ENCODE measurements at regions of chr22 and their contacts with region 1.

Region 1: DNA sequence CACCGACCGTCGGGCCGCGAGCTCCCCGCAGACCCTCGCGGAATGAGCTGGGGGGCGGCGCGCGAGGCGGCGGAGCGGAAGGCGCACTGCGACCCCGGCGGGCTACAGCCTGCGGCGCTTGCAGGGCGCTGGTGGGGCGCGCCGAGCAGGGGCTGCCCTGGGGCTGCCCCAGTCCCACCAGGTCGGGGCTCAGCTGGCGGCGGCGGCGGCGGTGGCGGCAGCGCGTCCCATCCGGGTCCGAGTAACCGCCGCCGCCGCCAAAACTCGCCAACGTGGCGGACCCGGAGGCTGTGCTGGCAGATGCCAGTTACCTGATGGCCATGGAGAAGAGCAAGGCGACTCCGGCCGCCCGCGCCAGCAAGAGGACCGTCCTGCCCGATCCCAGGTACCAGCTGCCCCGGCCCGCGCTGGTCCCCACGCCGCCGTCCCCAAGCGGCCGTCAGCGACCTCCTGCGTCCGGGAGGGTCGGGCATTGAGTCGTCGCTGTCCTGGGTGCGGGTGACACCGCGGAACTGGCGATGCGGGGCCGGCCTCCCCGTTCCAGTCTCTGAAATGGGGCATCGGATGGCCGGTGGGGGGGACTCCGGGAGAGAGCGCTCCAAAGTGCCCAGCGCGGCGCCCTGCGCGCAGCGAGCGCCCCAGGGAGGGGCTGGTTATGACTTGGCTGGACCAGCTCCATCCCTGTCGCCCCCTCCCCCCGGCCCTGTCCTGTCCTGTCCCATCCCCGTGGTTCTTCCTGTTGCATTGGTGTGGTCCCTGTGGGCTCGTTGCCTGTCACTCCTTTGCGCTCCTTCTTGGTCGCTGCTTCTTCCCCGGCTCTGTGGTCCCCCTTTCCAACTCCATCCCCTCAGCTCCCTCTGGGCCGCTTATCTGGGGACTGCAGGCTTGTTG is 63.5 kb downstream of the CRYBB2 start:
- DNase-seq: peak in 1 of 5 donors; percentile 62
- ATAC-seq: no peak
- H3K4me3 ChIP-seq: peak overlapping the region in 4 of 12 donors; percentile 2 to 11 (median 6)
- H3K27ac ChIP-seq: no peak overlapping the region
- H3K4me1 ChIP-seq: peaks cover 0 to 10% (median 0%) of the 10 kb centered on the region in 12 donors
- H3K27me3 ChIP-seq: peaks cover 9 to 58% (median 46%) of the 10 kb centered on the region in 9 donors
- CTCF ChIP-seq: no peak
- POLR2A ChIP-seq: no peak

Region 2: DNA sequence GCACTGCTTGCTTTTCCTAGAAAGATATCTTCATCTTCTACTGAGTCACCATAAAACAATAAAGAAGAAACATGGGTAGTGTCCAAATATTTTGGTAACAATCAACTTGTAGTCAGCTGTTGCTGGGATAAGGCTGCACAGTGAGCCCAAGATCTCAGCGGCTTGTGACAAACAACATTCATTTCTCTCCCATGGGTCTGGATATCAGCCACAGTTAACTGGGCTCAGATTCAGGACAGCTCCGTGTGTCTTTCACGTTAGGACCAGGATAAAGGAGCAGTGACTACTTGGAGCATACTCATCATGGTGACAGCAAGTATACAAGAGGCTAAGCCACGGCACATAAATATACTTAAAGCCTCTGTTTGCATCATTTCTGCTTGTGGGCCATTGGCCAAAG is 253.7 kb after region 1 on chr22:
- intact Hi-C with region 1: no loop called
- DNase-seq: peak in 1 of 5 donors; percentile 46
- ATAC-seq: peak; percentile 73 to 89 (median 81)
- H3K4me3 ChIP-seq: no peak overlapping the region
- H3K27ac ChIP-seq: peak overlapping the region in 1 of 12 donors; percentile 18
- H3K4me1 ChIP-seq: peaks cover 0 to 12% (median 0%) of the 10 kb centered on the region in 12 donors
- H3K27me3 ChIP-seq: no peaks in the 10 kb centered on the region
- CTCF ChIP-seq: no peak
- POLR2A ChIP-seq: no peak

Region 3: GRCh38 chr22:25582946-25583345 is 300.0 kb after region 1 on chr22:
- intact Hi-C with region 1: loop called in 3 of 10 experiments (anchors 5 to 10 kb)
- DNase-seq: no peak
- ATAC-seq: no peak
- H3K4me3 ChIP-seq: no peak overlapping the region
- H3K27ac ChIP-seq: no peak overlapping the region
- H3K4me1 ChIP-seq: peaks cover 0 to 10% (median 0%) of the 10 kb centered on the region in 12 donors
- H3K27me3 ChIP-seq: no peaks in the 10 kb centered on the region
- CTCF ChIP-seq: no peak
- POLR2A ChIP-seq: no peak

Measured in heart left ventricle (tissue), 16 donors.